HCT116 (cell line): ENCODE measurements at regions of chr13 and their contacts with region 1.

Region 1: DNA sequence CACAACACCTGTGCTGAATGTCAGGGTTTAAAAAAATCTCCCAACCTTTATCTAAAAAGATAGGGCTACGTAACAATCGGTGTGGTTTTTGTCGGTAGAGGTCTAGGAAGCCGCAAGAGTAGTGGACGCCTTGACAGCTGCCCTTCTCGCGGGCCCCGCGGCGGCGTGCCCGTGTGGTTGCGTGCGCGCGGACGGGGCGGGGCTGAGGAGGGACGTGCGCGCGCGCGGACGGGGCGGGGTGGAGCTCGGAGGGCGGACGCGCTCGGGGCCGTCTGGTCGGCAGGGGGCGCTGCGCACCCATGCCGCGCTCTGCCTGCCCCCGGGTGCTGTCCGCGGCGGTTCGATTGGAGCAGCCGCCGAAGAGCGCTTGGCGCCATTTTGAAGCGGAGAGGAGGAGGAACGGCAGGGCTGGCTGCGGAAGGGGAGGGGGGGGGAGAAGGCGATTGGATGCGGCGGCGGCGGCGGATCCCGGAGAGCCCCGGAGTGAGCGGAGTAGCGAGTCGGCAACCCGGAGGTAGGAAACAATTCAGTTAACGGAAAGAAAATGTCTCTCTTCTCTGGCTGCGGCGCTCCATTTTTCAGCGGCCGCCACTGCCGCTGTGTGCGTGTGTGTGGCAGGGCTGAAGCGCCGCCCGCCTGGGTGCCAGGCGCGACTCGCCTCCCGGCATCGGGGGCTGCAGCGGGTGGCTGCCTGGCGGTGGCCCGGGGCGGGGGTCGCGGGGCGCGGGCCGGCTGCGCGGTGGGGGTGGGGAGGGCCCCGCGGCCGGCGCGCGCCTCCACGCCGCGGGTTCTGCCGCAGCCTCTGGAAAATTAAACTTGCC is at the start of gene PDS5B:
- DNase-seq: peak; percentile 81
- ATAC-seq: peak; percentile 90
- H3K4me3 ChIP-seq: peak within 1 kb of the TSS; percentile 85 to 89
- H3K27ac ChIP-seq: peak within 1 kb of the TSS; percentile 79
- H3K4me1 ChIP-seq: peaks cover 9 to 18% of the 10 kb centered on the region in 2 experiments
- H3K27me3 ChIP-seq: no peaks in the 10 kb centered on the region
- CTCF ChIP-seq: peak; percentile 46 to 78 (median 75)
- POLR2A ChIP-seq: peak; percentile 20
- RAD21 ChIP-seq: peak; percentile 86
- total RNA-seq, gene PDS5B: 26.5 TPM

Region 2: GRCh38 chr13:32354040-32354439 is 232.2 kb before region 1 on chr13:
- CTCF ChIA-PET with region 1: no interaction called
- POLR2A ChIA-PET with region 1: no interaction called
- RAD21 ChIA-PET with region 1: no interaction called
- intact Hi-C with region 1: no loop called
- DNase-seq: no peak
- ATAC-seq: no peak
- H3K4me3 ChIP-seq: no peak overlapping the region
- H3K27ac ChIP-seq: no peak overlapping the region
- H3K4me1 ChIP-seq: no peaks in the 10 kb centered on the region
- H3K27me3 ChIP-seq: no peaks in the 10 kb centered on the region
- CTCF ChIP-seq: no peak
- POLR2A ChIP-seq: no peak
- RAD21 ChIP-seq: no peak

Region 3: GRCh38 chr13:32639502-32640105 is 53.3 kb after region 1 on chr13:
- CTCF ChIA-PET with region 1: interaction called, 11 read pairs
- POLR2A ChIA-PET with region 1: no interaction called
- RAD21 ChIA-PET with region 1: no interaction called
- intact Hi-C with region 1: loop called (anchors 1 kb)
- DNase-seq: peak; percentile 43
- ATAC-seq: peak; percentile 79
- H3K4me3 ChIP-seq: no peak overlapping the region
- H3K27ac ChIP-seq: no peak overlapping the region
- H3K4me1 ChIP-seq: no peaks in the 10 kb centered on the region
- H3K27me3 ChIP-seq: no peaks in the 10 kb centered on the region
- CTCF ChIP-seq: peak; percentile 61 to 89 (median 83); a peak in 5 of 6 replicates
- POLR2A ChIP-seq: no peak
- RAD21 ChIP-seq: peak; percentile 64

Region 4: GRCh38 chr13:32650705-32651311 is 64.5 kb after region 1 on chr13:
- CTCF ChIA-PET with region 1: interaction called, 10 read pairs
- POLR2A ChIA-PET with region 1: no interaction called
- RAD21 ChIA-PET with region 1: no interaction called
- intact Hi-C with region 1: loop called (anchors 5 kb)
- DNase-seq: peak; percentile 43
- ATAC-seq: peak; percentile 88
- H3K4me3 ChIP-seq: no peak overlapping the region
- H3K27ac ChIP-seq: no peak overlapping the region
- H3K4me1 ChIP-seq: peaks cover 0 to 6% of the 10 kb centered on the region in 2 experiments; a peak in 1 of 4 replicates
- H3K27me3 ChIP-seq: no peaks in the 10 kb centered on the region
- CTCF ChIP-seq: peak; percentile 36 to 84 (median 82); a peak in 5 of 6 replicates
- POLR2A ChIP-seq: no peak
- RAD21 ChIP-seq: peak; percentile 58

Region 5: GRCh38 chr13:32911506-32911905 is 325.2 kb after region 1 on chr13:
- CTCF ChIA-PET with region 1: interaction called, 5 read pairs
- POLR2A ChIA-PET with region 1: no interaction called
- RAD21 ChIA-PET with region 1: no interaction called
- intact Hi-C with region 1: loop called (anchors 2 kb)
- DNase-seq: peak; percentile 60
- ATAC-seq: peak; percentile 99
- H3K4me3 ChIP-seq: no peak overlapping the region
- H3K27ac ChIP-seq: no peak overlapping the region
- H3K4me1 ChIP-seq: no peaks in the 10 kb centered on the region
- H3K27me3 ChIP-seq: no peaks in the 10 kb centered on the region
- CTCF ChIP-seq: peak; percentile 46 to 66 (median 65); a peak in 5 of 6 replicates
- POLR2A ChIP-seq: no peak
- RAD21 ChIP-seq: peak; percentile 75

Region 6: DNA sequence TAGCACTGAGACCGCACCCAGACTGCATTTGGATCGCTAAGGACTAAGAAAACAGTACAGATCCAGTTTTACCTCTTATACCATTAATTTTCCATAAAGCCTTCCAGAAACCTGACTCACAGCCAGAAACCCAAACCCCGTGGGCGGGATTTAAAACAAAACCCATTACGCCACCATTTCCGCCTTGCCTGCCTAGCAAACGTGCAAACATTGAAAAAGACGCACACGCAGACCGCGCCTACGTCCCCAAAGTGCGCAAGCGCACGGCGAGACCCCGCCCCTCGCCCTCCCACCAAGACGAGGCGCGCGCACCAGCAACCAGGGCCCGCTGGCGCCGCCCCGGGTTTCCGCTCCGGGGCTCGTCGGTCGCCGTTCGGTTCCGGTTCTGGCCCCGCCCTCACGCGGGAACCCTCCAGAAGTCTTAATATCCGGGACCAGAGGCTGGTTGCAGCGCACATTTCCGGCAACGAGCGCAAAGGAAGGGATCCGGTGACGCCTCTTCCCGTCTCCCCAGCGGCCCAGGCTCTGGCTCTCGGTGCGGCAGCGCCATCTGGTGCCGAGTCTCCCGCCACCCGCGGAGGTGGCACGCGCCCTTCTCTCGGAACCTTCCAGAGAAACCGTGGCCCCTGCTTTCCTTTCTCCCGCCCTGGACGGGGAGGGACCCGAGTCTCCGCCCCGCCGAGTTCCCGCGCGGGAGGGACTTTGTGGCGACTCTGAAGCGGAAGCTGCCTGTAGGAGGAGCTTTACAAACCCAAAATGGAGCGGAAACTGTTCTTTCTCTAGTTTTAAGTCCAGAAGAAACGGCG is 956.2 kb after region 1 on chr13:
- CTCF ChIA-PET with region 1: interaction called, 4 read pairs
- POLR2A ChIA-PET with region 1: no interaction called
- RAD21 ChIA-PET with region 1: no interaction called
- intact Hi-C with region 1: loop called (anchors 1 kb)
- DNase-seq: peak; percentile 97
- ATAC-seq: peak; percentile 91
- H3K4me3 ChIP-seq: peak overlapping the region; percentile 56 to 61
- H3K27ac ChIP-seq: peak overlapping the region; percentile 98
- H3K4me1 ChIP-seq: peaks cover 19 to 26% of the 10 kb centered on the region in 2 experiments
- H3K27me3 ChIP-seq: no peaks in the 10 kb centered on the region
- CTCF ChIP-seq: peak; percentile 68 to 79 (median 78)
- POLR2A ChIP-seq: peak; percentile 41
- RAD21 ChIP-seq: peak; percentile 93

Region 7: DNA sequence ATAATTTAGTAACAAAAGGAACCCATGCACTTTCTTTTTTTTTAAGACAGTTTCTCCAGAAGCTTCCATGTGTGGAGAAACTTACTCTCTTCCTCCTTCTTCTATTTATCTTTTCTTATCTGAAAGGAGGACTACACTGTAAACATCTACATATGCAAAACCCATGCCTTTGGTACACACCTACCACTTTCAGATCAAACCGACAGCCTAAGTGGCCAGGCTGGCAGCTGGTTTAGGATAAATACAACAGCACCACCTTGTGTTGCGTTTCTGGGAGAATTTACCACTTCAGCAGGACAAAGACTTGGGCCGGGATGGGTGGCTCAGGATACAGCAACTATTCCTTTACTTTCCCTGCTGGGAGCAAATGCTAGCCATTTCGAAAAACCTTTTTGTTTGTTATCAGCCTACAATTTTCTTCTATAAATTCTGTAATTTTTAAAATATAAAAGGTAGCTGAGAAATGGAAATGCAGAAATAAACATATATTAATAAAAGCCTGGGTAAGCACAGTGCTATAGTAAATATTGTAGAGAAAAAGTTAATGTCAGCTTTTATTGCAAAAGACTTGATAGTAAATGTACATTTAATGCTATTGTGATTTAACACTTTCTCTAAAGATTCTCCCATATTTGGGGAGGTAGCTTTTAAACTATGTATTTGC is 1137.6 kb after region 1 on chr13:
- CTCF ChIA-PET with region 1: no interaction called
- POLR2A ChIA-PET with region 1: no interaction called
- RAD21 ChIA-PET with region 1: no interaction called
- intact Hi-C with region 1: loop called (anchors 5 kb)
- DNase-seq: peak; percentile 77
- ATAC-seq: peak; percentile 99
- H3K4me3 ChIP-seq: no peak overlapping the region
- H3K27ac ChIP-seq: no peak overlapping the region
- H3K4me1 ChIP-seq: no peaks in the 10 kb centered on the region; a peak in 1 of 4 replicates
- H3K27me3 ChIP-seq: no peaks in the 10 kb centered on the region
- CTCF ChIP-seq: peak; percentile 59 to 74 (median 65); a peak in 5 of 6 replicates
- POLR2A ChIP-seq: no peak
- RAD21 ChIP-seq: peak; percentile 86